ENCODE measurements at regions of chr6 and their contacts with region 1.

Region 1: GRCh38 chr6:90393232-90393884 is 96.7 kb upstream of the BACH2 start:
- DNase-seq: peak; percentile 48 to 88 (median 74)
- ATAC-seq: peak; percentile 62
- H3K4me3 ChIP-seq: no peak overlapping the region
- H3K4me3 Mint-ChIP-seq: no peak overlapping the region
- H3K27ac ChIP-seq: no peak overlapping the region
- H3K27ac Mint-ChIP-seq: peak overlapping the region; percentile 52
- H3K4me1 ChIP-seq: peaks cover 24% of the 10 kb centered on the region
- H3K4me1 Mint-ChIP-seq: peaks cover 30% of the 10 kb centered on the region
- H3K27me3 ChIP-seq: no peaks in the 10 kb centered on the region
- H3K27me3 Mint-ChIP-seq: no peaks in the 10 kb centered on the region
- CTCF ChIP-seq: peak; percentile 73

Region 2: GRCh38 chr6:89952686-89953085 is 440.7 kb before region 1 on chr6:
- CTCF ChIA-PET with region 1: interaction called, 8 read pairs
- POLR2A ChIA-PET with region 1: no interaction called
- intact Hi-C with region 1: loop called in 1 of 2 experiments (anchors 5 kb)
- DNase-seq: peak; percentile 36 to 92 (median 65)
- ATAC-seq: peak; percentile 84
- H3K4me3 ChIP-seq: no peak overlapping the region
- H3K4me3 Mint-ChIP-seq: peak overlapping the region; percentile 71
- H3K27ac ChIP-seq: peak overlapping the region; percentile 24 to 47
- H3K27ac Mint-ChIP-seq: peak overlapping the region; percentile 94
- H3K4me1 ChIP-seq: peaks cover 55% of the 10 kb centered on the region
- H3K4me1 Mint-ChIP-seq: peaks cover 70% of the 10 kb centered on the region
- H3K27me3 ChIP-seq: no peaks in the 10 kb centered on the region
- H3K27me3 Mint-ChIP-seq: no peaks in the 10 kb centered on the region
- CTCF ChIP-seq: no peak

Region 3: GRCh38 chr6:90110971-90111370 is 282.4 kb before region 1 on chr6:
- CTCF ChIA-PET with region 1: interaction called, 3 read pairs
- POLR2A ChIA-PET with region 1: no interaction called
- intact Hi-C with region 1: loop called in 1 of 2 experiments (anchors 10 kb)
- DNase-seq: peak; percentile 34 to 88 (median 68)
- ATAC-seq: peak; percentile 85
- H3K4me3 ChIP-seq: no peak overlapping the region
- H3K4me3 Mint-ChIP-seq: peak overlapping the region; percentile 42
- H3K27ac ChIP-seq: peak overlapping the region in 1 of 2 experiments; percentile 42
- H3K27ac Mint-ChIP-seq: peak overlapping the region; percentile 86
- H3K4me1 ChIP-seq: peaks cover 53% of the 10 kb centered on the region
- H3K4me1 Mint-ChIP-seq: peaks cover 68% of the 10 kb centered on the region
- H3K27me3 ChIP-seq: no peaks in the 10 kb centered on the region
- H3K27me3 Mint-ChIP-seq: no peaks in the 10 kb centered on the region
- CTCF ChIP-seq: no peak

Region 4: DNA sequence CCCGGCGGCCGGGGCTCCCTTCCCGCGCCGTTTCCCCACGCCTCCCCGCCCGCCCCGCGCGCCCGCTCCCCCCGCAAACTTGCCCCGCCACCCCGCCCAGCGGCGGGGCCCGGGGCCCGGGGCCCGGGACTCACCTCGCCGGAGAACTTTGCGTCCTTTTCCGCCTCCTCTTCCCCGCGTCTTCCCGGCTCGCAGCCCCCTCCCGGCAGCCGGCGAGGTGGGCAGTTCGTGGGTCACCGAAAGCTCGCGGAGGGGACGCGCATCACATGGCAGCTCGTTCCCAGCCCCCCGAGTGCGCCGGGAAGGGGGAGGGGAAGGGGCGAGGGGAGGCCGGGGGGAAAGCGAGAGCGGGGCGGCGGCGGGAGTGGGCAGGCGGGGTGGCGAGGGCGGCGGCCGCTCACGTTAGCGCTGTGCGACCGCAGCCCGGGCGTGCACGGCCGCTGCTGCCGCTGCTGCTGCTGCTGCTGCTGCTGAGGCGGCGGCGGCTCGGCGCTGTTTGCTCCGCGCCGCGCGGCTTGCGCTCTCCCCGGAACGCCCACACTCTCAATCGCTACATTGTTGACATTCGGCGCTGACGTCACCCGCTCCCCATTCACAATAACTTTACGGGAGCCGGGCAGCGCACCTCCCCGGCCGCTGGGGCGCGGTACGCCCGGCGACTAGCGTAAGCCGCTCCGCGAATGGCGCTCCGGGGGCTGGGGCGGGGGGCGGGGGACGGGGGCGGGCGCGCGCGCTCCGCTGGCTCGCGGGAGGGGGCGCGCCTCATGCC is 96.8 kb before region 1 on chr6 and contains the start of gene BACH2:
- CTCF ChIA-PET with region 1: interaction called, 9 read pairs
- POLR2A ChIA-PET with region 1: interaction called, 4 read pairs
- intact Hi-C with region 1: loop called (anchors 1 to 2 kb)
- DNase-seq: peak; percentile 87 to 97 (median 96)
- ATAC-seq: peak; percentile 74
- H3K4me3 ChIP-seq: peak within 1 kb of the TSS; percentile 69 to 71
- H3K4me3 Mint-ChIP-seq: peak within 1 kb of the TSS; percentile 94
- H3K27ac ChIP-seq: peak within 1 kb of the TSS; percentile 59 to 88
- H3K27ac Mint-ChIP-seq: peak within 1 kb of the TSS; percentile 94
- H3K4me1 ChIP-seq: peaks cover 27% of the 10 kb centered on the region
- H3K4me1 Mint-ChIP-seq: peaks cover 38% of the 10 kb centered on the region
- H3K27me3 ChIP-seq: no peaks in the 10 kb centered on the region
- H3K27me3 Mint-ChIP-seq: no peaks in the 10 kb centered on the region
- CTCF ChIP-seq: no peak
- total RNA-seq, gene BACH2: 162 to 164 TPM

Region 5: DNA sequence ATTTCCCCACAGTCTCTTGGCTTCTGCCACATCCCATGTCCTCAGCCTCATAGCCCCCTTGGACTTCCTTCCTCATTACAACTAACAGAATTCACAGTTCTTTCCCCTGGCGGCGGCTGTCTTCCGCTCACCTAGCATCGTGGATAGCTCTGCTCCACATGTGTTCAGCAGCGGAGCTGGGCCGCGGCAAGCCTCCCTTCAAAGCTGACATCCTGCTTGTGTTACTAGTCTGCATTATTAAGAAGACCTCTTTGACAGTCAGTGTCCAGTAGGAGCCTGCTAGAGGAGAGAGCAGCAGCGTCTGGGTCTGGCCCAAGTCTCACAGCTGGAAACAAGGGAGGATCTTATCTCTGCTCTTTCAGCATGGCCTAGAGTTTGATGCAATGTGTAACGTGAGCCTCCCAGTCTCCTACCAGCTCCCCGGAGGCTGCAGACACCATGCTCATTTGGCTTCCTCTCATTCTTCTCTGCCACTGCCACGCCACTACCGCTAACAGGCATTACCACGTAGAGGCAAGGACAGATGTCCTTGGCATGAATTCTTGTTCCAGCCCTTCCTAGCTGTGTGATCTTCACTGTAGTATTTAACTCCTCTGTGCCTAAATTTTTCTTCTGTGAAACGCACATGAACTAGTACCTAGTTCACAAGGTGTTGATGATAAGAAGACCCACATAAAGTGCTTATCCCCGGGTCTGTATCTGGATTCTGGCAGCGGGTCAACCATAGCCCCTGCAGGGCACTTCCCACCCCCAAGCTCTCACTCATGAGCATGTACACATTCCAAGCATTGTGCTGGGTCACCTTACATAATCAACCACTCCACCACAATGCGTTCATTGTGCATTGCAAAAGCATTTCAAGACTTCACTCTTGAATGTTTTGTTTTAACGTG is 10.4 kb after region 1 on chr6:
- CTCF ChIA-PET with region 1: interaction called, 21 read pairs
- POLR2A ChIA-PET with region 1: interaction called, 9 read pairs
- intact Hi-C with region 1: no loop called
- DNase-seq: no peak
- ATAC-seq: no peak
- H3K4me3 ChIP-seq: no peak overlapping the region
- H3K4me3 Mint-ChIP-seq: no peak overlapping the region
- H3K27ac ChIP-seq: peak overlapping the region in 1 of 2 experiments; percentile 72
- H3K27ac Mint-ChIP-seq: peak overlapping the region; percentile 66
- H3K4me1 ChIP-seq: peaks cover 22% of the 10 kb centered on the region
- H3K4me1 Mint-ChIP-seq: peaks cover 52% of the 10 kb centered on the region
- H3K27me3 ChIP-seq: no peaks in the 10 kb centered on the region
- H3K27me3 Mint-ChIP-seq: no peaks in the 10 kb centered on the region
- CTCF ChIP-seq: no peak

Region 6: GRCh38 chr6:90472744-90473143 is 79.4 kb after region 1 on chr6:
- CTCF ChIA-PET with region 1: interaction called, 47 read pairs
- POLR2A ChIA-PET with region 1: interaction called, 3 read pairs
- intact Hi-C with region 1: no loop called
- DNase-seq: peak in 4 of 9 experiments; percentile 20 to 64 (median 32)
- ATAC-seq: peak; percentile 47
- H3K4me3 ChIP-seq: peak overlapping the region in 1 of 2 experiments; percentile 9
- H3K4me3 Mint-ChIP-seq: peak overlapping the region; percentile 76
- H3K27ac ChIP-seq: no peak overlapping the region
- H3K27ac Mint-ChIP-seq: no peak overlapping the region
- H3K4me1 ChIP-seq: peaks cover 32% of the 10 kb centered on the region
- H3K4me1 Mint-ChIP-seq: peaks cover 40% of the 10 kb centered on the region
- H3K27me3 ChIP-seq: no peaks in the 10 kb centered on the region
- H3K27me3 Mint-ChIP-seq: no peaks in the 10 kb centered on the region
- CTCF ChIP-seq: no peak

Measured in CD8-positive, alpha-beta T cell (primary cell).